Caco-2 (cell line): ENCODE measurements at regions of chr7 and their contacts with region 1.

Region 1: GRCh38 chr7:39672176-39672575 is 48.8 kb downstream of the RALA start:
- DNase-seq: no peak
- H3K4me3 ChIP-seq: no peak overlapping the region
- H3K4me3 Mint-ChIP-seq: no peak overlapping the region
- H3K27ac Mint-ChIP-seq: no peak overlapping the region
- H3K4me1 ChIP-seq: no peaks in the 10 kb centered on the region
- H3K4me1 Mint-ChIP-seq: no peaks in the 10 kb centered on the region
- H3K27me3 ChIP-seq: no peaks in the 10 kb centered on the region
- H3K27me3 Mint-ChIP-seq: no peaks in the 10 kb centered on the region
- CTCF ChIP-seq: no peak

Region 2: DNA sequence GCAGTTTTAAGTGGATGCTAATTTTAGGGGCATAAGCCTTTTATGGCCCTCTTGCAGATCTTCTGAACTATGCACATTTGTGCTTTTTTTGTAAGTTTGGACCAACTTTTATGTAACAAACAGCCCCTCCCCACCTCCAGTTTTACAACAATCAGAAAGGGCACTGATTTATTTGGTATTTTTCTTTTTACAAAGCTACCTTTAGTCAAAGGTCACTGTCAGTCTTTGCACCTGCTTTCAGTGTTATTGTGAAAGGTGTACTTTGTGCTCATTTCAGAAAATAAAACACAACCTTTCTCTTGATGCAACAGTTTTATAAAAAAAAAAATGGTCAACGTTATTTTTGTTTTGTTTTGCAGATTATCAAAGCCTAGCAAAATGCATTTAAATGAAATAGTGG is 423.1 kb after region 1 on chr7:
- CTCF ChIA-PET with region 1: no interaction called
- POLR2A ChIA-PET with region 1: interaction called, 17 read pairs
- intact Hi-C with region 1: no loop called
- DNase-seq: no peak
- H3K4me3 ChIP-seq: no peak overlapping the region
- H3K4me3 Mint-ChIP-seq: no peak overlapping the region
- H3K27ac Mint-ChIP-seq: no peak overlapping the region
- H3K4me1 ChIP-seq: peaks cover 17% of the 10 kb centered on the region
- H3K4me1 Mint-ChIP-seq: peaks cover 4% of the 10 kb centered on the region
- H3K27me3 ChIP-seq: no peaks in the 10 kb centered on the region
- H3K27me3 Mint-ChIP-seq: no peaks in the 10 kb centered on the region
- CTCF ChIP-seq: no peak